ENCODE measurements at regions of chr4 and their contacts with region 1.

Region 1: GRCh38 chr4:80365928-80366327 is 30.4 kb downstream of the CFAP299 start:
- DNase-seq: peak; percentile 67
- H3K4me3 ChIP-seq: no peak overlapping the region
- H3K27ac ChIP-seq: no peak overlapping the region
- H3K4me1 ChIP-seq: no peaks in the 10 kb centered on the region
- H3K27me3 ChIP-seq: no peaks in the 10 kb centered on the region
- CTCF ChIP-seq: peak in 3 of 4 experiments; percentile 61 to 74 (median 74)
- POLR2A ChIP-seq: no peak

Region 2: DNA sequence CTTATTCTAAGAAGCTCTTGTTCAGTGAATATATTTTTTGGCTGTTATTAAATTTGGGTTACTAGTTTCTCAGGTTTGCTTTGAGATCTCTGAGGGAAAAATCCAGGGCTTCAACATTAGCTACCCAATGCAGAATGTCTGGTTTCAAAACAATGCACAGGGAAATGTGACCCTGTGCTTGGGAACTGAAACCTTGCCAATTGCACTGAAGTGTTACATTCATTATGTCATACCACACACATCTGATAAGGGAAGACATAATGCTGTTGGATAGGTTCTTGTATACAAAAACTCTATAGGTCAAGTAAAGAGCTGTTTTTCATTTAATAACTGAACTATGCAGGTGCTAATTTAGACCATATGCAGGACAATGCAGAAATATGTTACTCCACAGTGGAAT is 319.3 kb after region 1 on chr4:
- intact Hi-C with region 1: no loop called
- DNase-seq: no peak
- H3K4me3 ChIP-seq: no peak overlapping the region
- H3K27ac ChIP-seq: no peak overlapping the region
- H3K4me1 ChIP-seq: no peaks in the 10 kb centered on the region
- H3K27me3 ChIP-seq: no peaks in the 10 kb centered on the region
- CTCF ChIP-seq: no peak
- POLR2A ChIP-seq: no peak

Region 3: GRCh38 chr4:80989921-80990544 is 624.1 kb after region 1 on chr4:
- intact Hi-C with region 1: loop called (anchors 5 kb)
- DNase-seq: peak; percentile 36
- H3K4me3 ChIP-seq: no peak overlapping the region
- H3K27ac ChIP-seq: no peak overlapping the region
- H3K4me1 ChIP-seq: no peaks in the 10 kb centered on the region
- H3K27me3 ChIP-seq: no peaks in the 10 kb centered on the region
- CTCF ChIP-seq: peak in 3 of 4 experiments; percentile 58 to 74 (median 67)
- POLR2A ChIP-seq: no peak

Region 4: GRCh38 chr4:81040012-81040659 is 674.2 kb after region 1 on chr4:
- intact Hi-C with region 1: loop called (anchors 5 kb)
- DNase-seq: peak; percentile 11
- H3K4me3 ChIP-seq: no peak overlapping the region
- H3K27ac ChIP-seq: no peak overlapping the region
- H3K4me1 ChIP-seq: no peaks in the 10 kb centered on the region
- H3K27me3 ChIP-seq: no peaks in the 10 kb centered on the region
- CTCF ChIP-seq: peak; percentile 41 to 75 (median 65)
- POLR2A ChIP-seq: no peak